ENCODE measurements at regions of chr19 and their contacts with region 1.

Region 1: DNA sequence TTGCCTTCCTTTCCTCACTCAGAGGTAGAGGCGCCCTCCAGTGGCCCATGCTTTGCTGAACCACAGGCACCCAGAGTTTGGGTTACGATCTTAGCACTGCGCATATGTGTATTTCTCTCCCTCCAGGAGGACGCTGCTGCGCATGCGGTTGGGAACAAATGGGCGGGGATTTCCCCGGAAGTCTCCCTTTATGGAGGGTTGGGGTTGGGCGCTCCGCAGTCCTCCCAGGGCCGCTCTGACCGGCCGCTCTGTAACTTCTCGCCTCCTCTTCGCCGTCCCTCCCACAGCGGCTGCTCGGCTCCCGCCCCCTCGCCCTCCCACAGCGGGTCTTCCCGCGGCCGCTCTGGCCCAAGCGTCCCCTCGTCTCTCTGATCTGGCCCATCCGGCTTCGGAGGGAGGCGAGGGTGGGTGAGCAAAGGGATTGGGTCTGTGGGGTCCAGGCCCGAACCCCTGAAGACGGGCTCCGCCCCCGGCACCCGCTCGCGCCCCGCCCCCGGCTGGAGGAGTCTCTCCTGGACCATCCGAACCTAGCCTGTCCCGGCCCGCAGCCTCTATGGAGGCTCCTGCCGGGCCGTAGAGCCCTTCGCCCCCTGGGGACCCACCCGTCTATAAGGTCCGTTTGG is at the start of gene MEGF8:
- DNase-seq: peak; percentile 100
- H3K4me3 ChIP-seq: peak within 1 kb of the TSS; percentile 50 to 78 (median 69)
- H3K27ac ChIP-seq: no peak within 1 kb of the TSS
- H3K4me1 ChIP-seq: peaks cover 8% of the 10 kb centered on the region
- H3K27me3 ChIP-seq: peaks cover 19 to 27% of the 10 kb centered on the region in 2 experiments
- CTCF ChIP-seq: peak; percentile 90 to 96
- POLR2A ChIP-seq: no peak
- total RNA-seq, gene MEGF8: 34.3 and 39.6 TPM in 2 replicates

Region 2: DNA sequence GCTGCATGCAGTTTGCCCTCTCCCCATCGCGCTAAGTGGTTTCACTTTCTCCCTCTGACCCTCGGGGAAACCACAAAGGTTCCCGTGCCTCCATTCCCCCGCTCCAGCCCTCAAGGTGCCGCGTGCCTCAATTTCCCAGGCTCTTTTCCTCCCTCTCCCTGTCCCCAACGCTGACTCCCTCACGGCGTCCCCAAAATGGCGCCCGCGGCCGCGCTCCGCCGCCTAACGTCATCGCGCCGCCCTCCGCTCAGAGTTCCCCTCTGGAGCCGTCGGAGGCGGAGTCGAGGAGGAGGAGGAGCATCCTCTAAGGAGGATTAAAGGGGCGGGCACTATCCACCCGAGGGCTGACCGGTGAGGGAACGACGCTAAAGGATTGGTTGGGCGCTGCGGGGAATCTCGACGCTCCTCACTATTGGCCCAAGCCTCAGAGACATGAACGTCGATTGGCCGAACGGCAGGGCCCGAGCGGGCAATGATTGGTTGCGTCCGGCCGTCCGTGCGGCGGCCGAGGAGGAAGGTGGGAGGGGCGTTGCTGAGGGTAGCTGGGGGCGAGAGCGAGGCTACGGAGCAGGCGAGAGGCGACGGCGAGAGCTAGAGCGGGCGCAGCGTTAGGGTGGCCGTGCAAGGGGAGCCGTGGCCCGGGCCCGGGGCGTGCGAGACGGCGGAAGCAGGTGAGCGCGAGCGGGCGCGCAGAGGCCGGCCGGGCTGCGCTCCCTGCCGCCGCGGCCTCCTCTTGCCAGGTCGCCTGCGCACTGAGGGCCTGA is 249.6 kb before region 1 on chr19 and contains the start of gene ZNF574:
- CTCF ChIA-PET with region 1: no interaction called
- POLR2A ChIA-PET with region 1: no interaction called
- dilution Hi-C with region 1: no loop called
- intact Hi-C with region 1: loop called (anchors 1 kb)
- DNase-seq: peak; percentile 100
- H3K4me3 ChIP-seq: peak within 1 kb of the TSS; percentile 89 to 92 (median 90)
- H3K27ac ChIP-seq: peak within 1 kb of the TSS; percentile 85
- H3K4me1 ChIP-seq: peaks cover 16% of the 10 kb centered on the region
- H3K27me3 ChIP-seq: peaks cover 2% of the 10 kb centered on the region in 2 experiments
- CTCF ChIP-seq: no peak
- POLR2A ChIP-seq: no peak
- total RNA-seq, gene ZNF574: 14.0 and 15.3 TPM in 2 replicates

Region 3: DNA sequence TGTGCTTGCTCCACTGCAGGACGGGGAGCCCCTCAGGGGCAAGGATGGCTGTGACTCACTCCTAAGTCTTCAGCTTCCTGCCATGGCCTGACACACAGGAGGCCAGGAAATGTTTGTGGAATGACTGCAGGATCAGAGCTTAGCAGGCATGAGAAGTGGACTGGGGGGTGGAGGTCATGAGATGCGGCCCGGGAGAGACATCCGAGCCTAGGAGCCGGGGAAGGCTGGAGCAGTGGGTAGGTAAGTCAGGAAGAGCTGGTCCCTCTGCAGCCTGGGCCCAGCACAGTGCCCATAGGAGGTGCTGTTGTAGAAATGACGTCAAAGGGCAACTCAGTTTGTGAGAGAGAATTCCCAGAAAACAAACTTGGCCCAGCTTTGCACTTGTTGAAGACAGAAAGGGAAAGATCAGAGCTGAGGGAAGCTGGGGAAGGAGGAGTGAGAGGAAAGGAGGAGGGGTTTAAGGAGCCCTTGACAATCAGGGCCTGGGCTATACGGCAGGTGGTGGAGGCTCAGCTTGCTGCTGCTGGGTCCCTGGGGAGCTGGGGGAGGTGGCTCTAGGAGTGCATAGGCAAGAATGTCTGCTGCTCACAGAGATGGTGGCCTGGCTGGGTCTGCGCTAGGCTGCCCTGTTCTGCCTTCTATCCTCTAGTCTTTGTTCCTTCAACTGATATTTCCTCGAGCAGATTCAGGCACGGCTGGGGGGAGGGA is 211.6 kb before region 1 on chr19:
- CTCF ChIA-PET with region 1: no interaction called
- POLR2A ChIA-PET with region 1: no interaction called
- dilution Hi-C with region 1: no loop called
- intact Hi-C with region 1: loop called (anchors 1 kb)
- DNase-seq: peak; percentile 97
- H3K4me3 ChIP-seq: no peak overlapping the region
- H3K27ac ChIP-seq: peak overlapping the region; percentile 88
- H3K4me1 ChIP-seq: peaks cover 29% of the 10 kb centered on the region
- H3K27me3 ChIP-seq: no peaks in the 10 kb centered on the region
- CTCF ChIP-seq: peak; percentile 26 to 47
- POLR2A ChIP-seq: peak; percentile 42

Region 4: GRCh38 chr19:42283143-42284065 is 42.0 kb before region 1 on chr19:
- CTCF ChIA-PET with region 1: interaction called, 5 read pairs
- POLR2A ChIA-PET with region 1: no interaction called
- dilution Hi-C with region 1: no loop called
- intact Hi-C with region 1: loop called (anchors 1 kb)
- DNase-seq: peak; percentile 95
- H3K4me3 ChIP-seq: peak overlapping the region in 2 of 3 experiments; percentile 3 to 35
- H3K27ac ChIP-seq: no peak overlapping the region
- H3K4me1 ChIP-seq: peaks cover 53% of the 10 kb centered on the region
- H3K27me3 ChIP-seq: no peaks in the 10 kb centered on the region
- CTCF ChIP-seq: no peak
- POLR2A ChIP-seq: no peak

Region 5: DNA sequence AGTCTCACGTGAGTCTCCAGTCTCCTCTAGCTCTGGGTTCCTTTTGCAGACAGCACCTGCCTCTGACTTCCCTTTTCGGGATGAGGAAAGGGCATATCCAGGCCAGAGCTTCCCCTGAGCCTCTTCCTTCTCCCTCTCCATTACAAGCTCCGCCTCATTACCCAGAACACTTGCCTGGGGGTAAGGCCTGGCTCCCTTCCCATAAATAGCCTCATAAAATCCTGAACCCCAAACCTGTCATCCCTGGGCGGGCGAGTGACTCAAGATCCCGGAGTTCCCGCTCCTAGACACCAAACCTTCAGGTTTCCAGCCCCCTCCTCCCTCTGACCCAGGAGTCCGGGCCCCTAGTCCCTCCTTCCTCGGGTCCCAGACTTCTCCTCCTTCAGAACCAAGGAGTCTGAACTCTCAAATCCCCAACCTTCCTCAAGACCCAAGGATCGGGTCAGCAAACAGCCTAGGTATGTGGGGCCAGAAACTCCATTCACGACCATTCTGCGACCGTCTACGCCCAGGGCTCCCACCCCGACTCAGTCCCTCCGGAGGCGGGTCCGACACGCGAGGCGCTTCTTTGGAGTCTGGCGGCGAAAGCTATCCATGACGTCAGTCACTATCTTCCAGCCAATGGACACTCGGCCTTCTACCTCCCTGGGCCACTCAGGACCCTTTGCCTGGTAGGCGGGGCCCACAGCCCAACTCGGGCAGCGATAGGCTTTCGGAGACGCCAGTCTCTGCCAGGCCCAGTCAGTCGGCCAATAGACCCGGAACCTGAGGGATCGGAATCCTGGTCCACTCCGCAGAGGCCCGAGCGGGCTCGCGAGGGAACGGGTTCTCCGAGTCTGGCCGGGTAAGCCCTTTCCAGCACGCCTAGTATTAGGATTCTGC is 71.2 kb after region 1 on chr19:
- CTCF ChIA-PET with region 1: no interaction called
- POLR2A ChIA-PET with region 1: no interaction called
- dilution Hi-C with region 1: no loop called
- intact Hi-C with region 1: loop called (anchors 1 kb)
- DNase-seq: peak; percentile 100
- H3K4me3 ChIP-seq: peak overlapping the region; percentile 36 to 73 (median 49)
- H3K27ac ChIP-seq: peak overlapping the region; percentile 77
- H3K4me1 ChIP-seq: peaks cover 17% of the 10 kb centered on the region
- H3K27me3 ChIP-seq: no peaks in the 10 kb centered on the region
- CTCF ChIP-seq: no peak
- POLR2A ChIP-seq: peak; percentile 87

Region 6: GRCh38 chr19:42431486-42431885 is 106.1 kb after region 1 on chr19:
- CTCF ChIA-PET with region 1: no interaction called
- POLR2A ChIA-PET with region 1: no interaction called
- dilution Hi-C with region 1: no loop called
- intact Hi-C with region 1: no loop called
- DNase-seq: no peak
- H3K4me3 ChIP-seq: no peak overlapping the region
- H3K27ac ChIP-seq: no peak overlapping the region
- H3K4me1 ChIP-seq: peaks cover 10% of the 10 kb centered on the region
- H3K27me3 ChIP-seq: no peaks in the 10 kb centered on the region
- CTCF ChIP-seq: no peak
- POLR2A ChIP-seq: no peak

Region 7: DNA sequence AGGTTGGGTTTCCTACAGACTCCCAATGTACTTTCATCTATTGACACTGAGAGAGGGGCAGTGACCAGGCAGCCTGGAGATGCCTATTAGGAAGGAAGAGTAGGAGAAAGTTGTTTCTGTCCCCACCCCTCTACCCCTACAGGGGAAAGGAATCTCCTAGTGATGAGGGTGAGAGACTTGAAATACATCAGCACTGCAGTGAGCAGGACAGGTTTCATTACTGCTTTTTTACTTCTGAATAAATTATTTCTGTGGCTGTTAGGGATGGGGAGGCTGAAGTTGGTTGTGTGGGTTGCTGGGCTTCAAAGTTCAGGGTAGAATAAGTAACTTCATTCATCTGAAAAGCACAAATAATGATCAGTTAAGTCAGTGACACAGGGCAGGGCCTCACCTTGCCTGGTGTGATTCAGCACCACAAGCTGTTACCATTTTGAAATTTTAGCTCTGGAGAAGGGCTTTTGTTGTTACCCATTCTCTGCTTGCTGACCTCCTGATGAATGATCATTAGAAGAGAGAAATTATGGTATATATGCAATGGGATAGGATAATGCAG is 183.6 kb after region 1 on chr19:
- CTCF ChIA-PET with region 1: no interaction called
- POLR2A ChIA-PET with region 1: no interaction called
- dilution Hi-C with region 1: no loop called
- intact Hi-C with region 1: no loop called
- DNase-seq: no peak
- H3K4me3 ChIP-seq: no peak overlapping the region
- H3K27ac ChIP-seq: no peak overlapping the region
- H3K4me1 ChIP-seq: no peaks in the 10 kb centered on the region
- H3K27me3 ChIP-seq: no peaks in the 10 kb centered on the region
- CTCF ChIP-seq: no peak
- POLR2A ChIP-seq: no peak

Measured in endothelial cell of umbilical vein (primary cell).